IMR-90 (cell line): ENCODE measurements at regions of chrX and their contacts with region 1.

Region 1: GRCh38 chrX:63350941-63351616 is at the start of gene SPIN4:
- DNase-seq: peak; percentile 80
- ATAC-seq: peak; percentile 98
- H3K4me3 ChIP-seq: peak within 1 kb of the TSS; percentile 87
- H3K27ac ChIP-seq: peak within 1 kb of the TSS; percentile 95
- H3K4me1 ChIP-seq: no peaks in the 10 kb centered on the region
- H3K27me3 ChIP-seq: no peaks in the 10 kb centered on the region
- CTCF ChIP-seq: no peak
- POLR2A ChIP-seq: 0 out of 2 replicates have a peak, but pooled peaks have one; percentile 26
- RAD21 ChIP-seq: no peak
- total RNA-seq, gene SPIN4: 3.2 and 3.6 TPM in 2 replicates

Region 2: GRCh38 chrX:62923093-62923492 is 428.0 kb before region 1 on chrX:
- CTCF ChIA-PET with region 1: no interaction called
- POLR2A ChIA-PET with region 1: no interaction called
- dilution Hi-C with region 1: no loop called
- in situ Hi-C with region 1: no loop called
- intact Hi-C with region 1: no loop called
- DNase-seq: no peak
- ATAC-seq: no peak
- H3K4me3 ChIP-seq: no peak overlapping the region
- H3K27ac ChIP-seq: no peak overlapping the region
- H3K4me1 ChIP-seq: no peaks in the 10 kb centered on the region
- H3K27me3 ChIP-seq: no peaks in the 10 kb centered on the region
- CTCF ChIP-seq: no peak
- POLR2A ChIP-seq: no peak
- RAD21 ChIP-seq: no peak

Region 3: GRCh38 chrX:63421411-63421810 is 70.3 kb after region 1 on chrX:
- CTCF ChIA-PET with region 1: no interaction called
- POLR2A ChIA-PET with region 1: no interaction called
- dilution Hi-C with region 1: no loop called
- in situ Hi-C with region 1: no loop called
- intact Hi-C with region 1: loop called (anchors 10 kb)
- DNase-seq: no peak
- ATAC-seq: no peak
- H3K4me3 ChIP-seq: no peak overlapping the region
- H3K27ac ChIP-seq: no peak overlapping the region
- H3K4me1 ChIP-seq: no peaks in the 10 kb centered on the region
- H3K27me3 ChIP-seq: no peaks in the 10 kb centered on the region
- CTCF ChIP-seq: no peak
- POLR2A ChIP-seq: no peak
- RAD21 ChIP-seq: no peak

Region 4: DNA sequence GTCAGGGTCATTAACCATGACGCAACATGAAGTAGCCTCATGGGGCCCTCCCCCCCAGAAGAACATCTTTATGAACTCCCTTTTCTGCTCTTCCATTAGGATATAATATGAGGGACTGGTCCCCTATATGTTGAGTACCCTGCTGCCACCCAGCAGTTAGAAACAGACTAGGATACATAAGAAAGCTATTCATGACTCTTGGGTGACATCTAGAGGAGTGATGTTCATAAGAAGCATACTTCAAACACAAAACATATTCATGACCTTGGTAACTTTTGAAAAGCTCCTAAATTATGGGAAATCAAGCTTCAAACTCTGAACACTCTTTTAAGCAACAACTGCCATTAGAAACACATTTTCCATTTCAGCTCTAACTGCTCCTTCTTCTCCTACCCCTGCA is 155.2 kb after region 1 on chrX:
- CTCF ChIA-PET with region 1: no interaction called
- POLR2A ChIA-PET with region 1: no interaction called
- dilution Hi-C with region 1: no loop called
- in situ Hi-C with region 1: no loop called
- intact Hi-C with region 1: loop called (anchors 5 kb)
- DNase-seq: peak; percentile 56
- ATAC-seq: peak; percentile 68
- H3K4me3 ChIP-seq: no peak overlapping the region
- H3K27ac ChIP-seq: no peak overlapping the region
- H3K4me1 ChIP-seq: no peaks in the 10 kb centered on the region
- H3K27me3 ChIP-seq: no peaks in the 10 kb centered on the region
- CTCF ChIP-seq: peak; percentile 43
- POLR2A ChIP-seq: no peak
- RAD21 ChIP-seq: peak; percentile 52

Region 5: GRCh38 chrX:63686878-63687714 is 336.0 kb after region 1 on chrX:
- CTCF ChIA-PET with region 1: no interaction called
- POLR2A ChIA-PET with region 1: no interaction called
- dilution Hi-C with region 1: no loop called
- in situ Hi-C with region 1: no loop called
- intact Hi-C with region 1: loop called (anchors 10 kb)
- DNase-seq: peak; percentile 45
- ATAC-seq: peak; percentile 90
- H3K4me3 ChIP-seq: no peak overlapping the region
- H3K27ac ChIP-seq: no peak overlapping the region
- H3K4me1 ChIP-seq: 0 out of 2 replicates have a peak, but pooled peaks cover 2% of the 10 kb centered on the region
- H3K27me3 ChIP-seq: no peaks in the 10 kb centered on the region
- CTCF ChIP-seq: peak; percentile 75
- POLR2A ChIP-seq: no peak
- RAD21 ChIP-seq: peak; percentile 82